ENCODE measurements at regions of chr3 and their contacts with region 1.

Region 1: GRCh38 chr3:4493014-4493940 is at the start of gene ITPR1:
- DNase-seq: peak; percentile 96

Region 2: DNA sequence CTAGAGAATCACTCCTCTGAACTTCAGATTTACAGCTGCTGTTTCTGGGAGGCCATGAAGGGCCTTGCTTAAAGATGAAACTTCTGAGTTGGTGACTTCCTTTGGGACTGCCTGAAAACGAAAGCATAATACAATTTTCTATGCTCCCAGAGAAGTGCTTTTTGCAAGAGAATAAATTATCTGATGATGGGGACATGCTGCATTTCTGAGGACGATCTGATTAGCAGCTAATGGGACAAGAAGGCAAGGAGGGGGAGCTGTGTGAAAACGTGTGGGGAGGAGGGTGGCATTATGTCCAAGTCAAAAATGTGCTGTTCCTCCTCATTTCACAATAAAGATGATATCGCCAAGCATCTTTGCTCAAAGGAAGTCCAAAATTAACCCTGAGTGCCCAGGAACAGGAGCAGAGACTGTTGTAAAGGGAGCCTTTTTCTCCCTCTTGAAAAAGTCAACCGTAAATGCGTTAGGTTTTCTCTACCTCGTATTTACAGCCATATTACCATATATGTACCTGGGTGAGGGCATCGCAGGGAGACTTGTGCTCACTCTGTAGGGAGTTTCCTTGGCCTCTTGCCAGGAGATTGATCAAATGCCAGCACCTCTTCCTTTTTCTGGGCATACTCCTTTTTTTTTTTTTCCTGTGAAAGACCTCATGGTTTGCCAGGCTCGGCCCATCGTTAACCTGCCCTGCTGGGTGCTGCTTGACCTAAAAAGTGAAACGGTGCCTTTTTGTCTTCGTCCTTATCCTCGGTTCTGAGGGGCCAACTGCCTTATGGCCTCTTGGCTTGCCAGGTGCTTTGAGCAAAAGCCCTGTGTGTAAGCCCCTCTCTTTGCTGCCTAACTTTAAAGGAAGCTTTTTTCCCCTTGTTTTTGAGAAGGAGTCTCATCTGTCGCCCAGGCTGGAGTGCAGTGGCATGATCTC is 11.3 kb after region 1 on chr3:
- CTCF ChIA-PET with region 1: interaction called, 3 read pairs
- POLR2A ChIA-PET with region 1: interaction called, 17 read pairs
- DNase-seq: no peak

Region 3: GRCh38 chr3:4551051-4551711 is 57.9 kb after region 1 on chr3:
- CTCF ChIA-PET with region 1: no interaction called
- POLR2A ChIA-PET with region 1: interaction called, 10 read pairs
- DNase-seq: no peak

Region 4: DNA sequence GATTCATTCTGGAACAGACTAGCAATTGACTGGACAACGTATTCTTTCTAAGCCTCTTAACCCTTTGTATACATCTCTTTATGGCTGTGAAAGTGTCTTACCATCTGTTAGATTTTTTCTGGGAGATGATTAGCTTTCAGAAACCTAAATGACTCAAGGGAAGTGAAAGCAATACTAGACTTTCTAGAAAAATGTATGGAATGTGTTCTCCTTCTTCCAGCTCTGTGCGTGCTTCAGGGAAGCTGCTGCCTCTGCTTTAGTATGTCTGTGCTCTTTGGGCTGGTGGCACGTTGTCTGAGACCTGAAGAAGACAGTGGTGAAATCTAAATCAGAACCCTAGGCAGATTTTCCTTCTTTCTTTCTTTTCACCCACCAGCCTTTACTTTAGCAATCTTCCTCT is 89.3 kb after region 1 on chr3:
- CTCF ChIA-PET with region 1: no interaction called
- POLR2A ChIA-PET with region 1: interaction called, 10 read pairs
- DNase-seq: no peak

Measured in HEK293T (cell line).